Endothelial cell of umbilical vein (primary cell): ENCODE measurements at regions of chr22 and their contacts with region 1.

Region 1: DNA sequence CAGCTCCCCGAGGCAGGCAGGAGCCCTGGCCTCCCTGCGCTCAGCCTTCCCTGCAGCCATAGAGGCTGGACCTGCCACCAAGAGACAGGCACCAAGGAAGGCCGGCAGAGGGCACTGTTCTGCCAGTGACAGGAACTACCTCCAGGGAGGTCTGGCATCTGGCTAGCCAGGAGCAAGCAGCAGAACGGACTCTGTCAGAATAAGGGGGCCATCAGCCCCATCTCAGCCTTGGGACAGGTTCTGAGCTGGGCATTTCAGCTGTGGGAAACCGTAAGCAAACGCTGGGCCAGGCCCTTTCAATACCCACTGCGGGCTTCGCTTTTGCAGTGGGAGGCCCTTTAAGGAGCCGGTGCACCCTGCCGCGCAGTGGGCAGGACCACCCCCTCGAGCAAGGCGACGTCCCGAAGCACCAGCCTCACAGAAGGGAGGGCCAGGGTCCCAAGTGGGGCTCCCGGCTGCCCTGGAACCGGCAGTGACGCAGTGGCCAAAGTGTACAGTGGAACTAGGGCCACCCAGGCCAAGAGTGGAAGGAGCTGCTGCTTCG is 18.2 kb downstream of the IFT27 start:
- DNase-seq: peak; percentile 53
- H3K4me3 ChIP-seq: no peak overlapping the region
- H3K27ac ChIP-seq: no peak overlapping the region
- H3K4me1 ChIP-seq: no peaks in the 10 kb centered on the region
- H3K27me3 ChIP-seq: peaks cover 0 to 4% of the 10 kb centered on the region in 2 experiments
- CTCF ChIP-seq: peak; percentile 82 to 94
- POLR2A ChIP-seq: no peak

Region 2: DNA sequence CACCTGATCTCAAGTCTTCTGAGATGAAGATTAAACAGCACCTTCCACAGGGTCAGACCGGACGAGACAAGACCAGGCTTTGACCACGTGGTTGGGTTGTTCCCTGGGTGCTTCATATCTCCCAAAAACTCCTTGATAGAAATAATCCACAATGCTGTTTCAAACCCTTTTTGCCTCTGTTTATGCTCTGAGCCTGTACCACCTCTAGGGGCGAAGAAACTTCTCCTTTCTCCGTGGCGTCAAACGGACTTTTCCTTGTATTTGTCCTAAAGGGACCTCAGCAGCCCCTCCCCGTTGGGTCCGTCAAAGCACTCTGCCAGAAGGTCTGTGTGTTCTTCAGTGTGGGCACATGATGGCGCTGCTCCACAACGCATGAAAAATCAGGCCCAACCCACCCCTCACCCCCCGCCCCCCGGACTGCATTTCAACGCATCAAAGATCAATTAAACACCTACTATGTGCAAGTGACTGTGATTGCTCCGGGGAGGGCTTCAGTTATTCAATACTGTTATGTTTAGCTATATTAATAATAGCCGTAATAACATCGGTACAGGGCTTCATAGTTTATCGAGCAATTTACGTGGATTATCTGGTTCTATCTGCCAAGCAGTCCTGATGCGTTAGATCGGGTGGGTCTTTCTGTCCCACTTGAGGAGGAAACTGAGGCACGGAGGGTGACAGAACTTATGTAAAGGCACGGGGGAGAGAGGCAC is 211.5 kb before region 1 on chr22:
- CTCF ChIA-PET with region 1: interaction called, 13 read pairs
- POLR2A ChIA-PET with region 1: no interaction called
- dilution Hi-C with region 1: no loop called
- intact Hi-C with region 1: loop called (anchors 5 kb)
- DNase-seq: peak; percentile 54
- H3K4me3 ChIP-seq: no peak overlapping the region
- H3K27ac ChIP-seq: no peak overlapping the region
- H3K4me1 ChIP-seq: peaks cover 23% of the 10 kb centered on the region
- H3K27me3 ChIP-seq: peaks cover 2 to 4% of the 10 kb centered on the region in 2 experiments
- CTCF ChIP-seq: peak; percentile 45 to 68
- POLR2A ChIP-seq: no peak

Region 3: DNA sequence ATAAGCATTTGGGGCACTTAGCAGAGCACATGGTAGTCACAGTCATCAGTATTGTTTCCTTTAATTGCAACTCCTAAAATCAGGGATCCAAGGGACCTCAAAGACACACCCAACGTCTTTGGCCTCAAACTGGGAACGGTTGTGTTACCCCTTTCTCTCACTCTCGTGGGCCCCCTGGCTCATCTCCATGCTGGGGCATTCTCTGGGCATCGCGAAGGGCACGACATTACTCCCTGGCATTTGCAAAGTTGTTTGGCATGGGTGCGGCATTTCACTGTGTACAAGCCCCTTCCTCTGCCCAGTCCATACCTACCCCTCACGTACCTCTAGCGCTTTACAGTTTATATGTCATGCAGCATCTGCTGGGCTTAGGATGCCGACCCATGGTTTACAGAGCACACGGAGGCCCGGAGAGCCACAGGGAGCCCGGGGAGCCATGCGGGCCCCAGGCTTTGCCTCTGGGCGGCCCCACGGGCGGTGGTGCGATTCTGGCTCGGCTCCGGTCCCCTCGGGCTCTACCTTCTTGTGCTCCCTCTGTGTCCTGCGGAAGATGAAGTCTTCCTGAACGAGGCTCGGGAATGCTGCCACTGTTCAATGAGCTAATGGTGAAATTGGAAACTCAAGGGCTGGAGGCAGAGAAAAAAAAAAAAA is 32.3 kb before region 1 on chr22:
- CTCF ChIA-PET with region 1: no interaction called
- POLR2A ChIA-PET with region 1: no interaction called
- dilution Hi-C with region 1: no loop called
- intact Hi-C with region 1: no loop called
- DNase-seq: no peak
- H3K4me3 ChIP-seq: no peak overlapping the region
- H3K27ac ChIP-seq: no peak overlapping the region
- H3K4me1 ChIP-seq: no peaks in the 10 kb centered on the region
- H3K27me3 ChIP-seq: peaks cover 3 to 10% of the 10 kb centered on the region in 2 experiments
- CTCF ChIP-seq: no peak
- POLR2A ChIP-seq: no peak